GM18951 (cell line): ENCODE measurements at regions of chr6 and their contacts with region 1.

Region 1: DNA sequence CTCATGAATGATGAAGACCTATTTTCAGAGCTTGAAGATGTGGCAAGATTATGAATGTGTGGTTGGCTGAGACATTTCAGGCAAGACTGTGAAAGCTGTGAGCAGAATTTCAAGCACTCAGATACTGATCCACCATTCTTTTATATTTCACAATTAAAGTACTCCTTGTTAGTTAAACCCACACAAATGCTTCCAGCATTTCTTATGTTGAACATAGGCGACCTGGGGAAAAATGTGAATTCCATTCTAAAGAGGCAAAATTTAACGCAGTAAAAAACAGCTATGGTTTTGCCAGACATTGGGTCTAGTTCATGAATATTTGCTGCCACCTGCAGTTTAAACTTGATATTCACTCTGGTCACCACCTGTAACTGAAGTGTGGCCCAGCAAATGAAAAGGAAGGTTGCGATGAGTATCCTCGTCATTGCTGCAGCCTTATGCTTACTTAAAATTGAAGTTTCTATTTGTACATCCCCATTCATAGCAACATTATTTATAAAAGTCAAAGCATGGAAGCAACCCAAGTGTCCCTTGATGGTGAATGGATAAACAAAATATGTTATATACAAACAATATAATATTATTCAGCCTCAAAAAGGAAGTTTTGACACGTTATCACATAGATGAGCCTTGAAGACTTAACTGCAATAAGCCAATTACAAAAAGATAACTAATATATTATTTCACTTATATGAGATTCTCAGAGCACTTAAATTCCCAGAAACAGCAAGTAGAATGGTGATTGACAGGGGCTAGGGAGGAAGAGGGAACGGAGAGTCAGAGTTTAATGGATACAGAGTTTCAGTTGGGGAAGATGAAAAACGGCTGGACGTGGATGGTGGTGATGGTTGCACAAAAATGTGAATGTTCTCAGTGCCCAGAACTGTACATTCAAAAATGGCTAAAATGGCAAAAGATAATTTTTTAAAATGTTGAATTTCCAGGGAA is 32.4 kb upstream of the FAM184A start:
- POLR2A ChIP-seq: no peak

Region 2: DNA sequence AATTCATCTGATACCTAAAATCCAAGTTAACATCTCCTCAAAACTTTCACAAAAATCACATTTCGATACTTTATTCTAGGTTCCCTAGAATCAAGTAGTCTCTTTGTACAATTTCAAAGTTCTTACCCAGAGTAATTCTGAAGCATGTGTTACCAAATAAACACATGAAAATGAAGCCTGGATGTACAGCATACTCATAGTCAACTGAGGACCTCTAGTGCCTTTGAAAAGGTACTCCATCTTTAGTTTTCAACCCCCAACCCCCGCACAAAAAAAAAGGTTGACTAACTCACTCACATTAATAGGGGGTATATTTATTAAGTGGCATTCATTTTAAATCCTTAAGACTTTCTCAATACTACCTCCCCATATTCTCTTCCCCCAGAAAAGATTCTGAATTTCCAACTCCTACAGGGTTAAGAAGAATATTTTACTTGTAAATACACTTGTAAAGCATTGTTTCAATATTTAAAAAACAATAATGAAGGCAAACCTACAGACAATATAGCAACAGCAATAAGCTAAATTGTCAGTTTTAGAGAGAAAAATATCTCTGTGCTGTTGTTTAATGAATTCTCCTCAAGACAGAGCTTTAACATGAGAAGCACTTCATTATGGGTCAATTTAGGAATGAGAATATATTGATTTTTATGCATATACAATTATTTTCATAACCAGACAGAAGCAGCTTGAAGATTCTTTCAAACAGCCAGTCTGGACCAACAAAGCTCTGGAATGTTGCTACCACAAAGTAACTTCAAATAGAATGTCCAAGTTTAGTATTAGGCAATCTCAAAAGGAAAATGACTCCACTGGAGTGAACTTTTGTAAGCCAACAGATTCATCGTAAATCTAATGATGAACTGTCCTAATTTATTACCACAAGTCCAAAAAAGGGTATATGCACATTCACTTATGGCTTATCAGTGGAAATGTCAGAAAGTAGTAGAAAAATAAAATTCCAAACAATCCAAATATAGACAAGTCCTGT is 559.5 kb before region 1 on chr6:
- in situ Hi-C with region 1: loop called (anchors 25 kb)
- POLR2A ChIP-seq: no peak

Region 3: DNA sequence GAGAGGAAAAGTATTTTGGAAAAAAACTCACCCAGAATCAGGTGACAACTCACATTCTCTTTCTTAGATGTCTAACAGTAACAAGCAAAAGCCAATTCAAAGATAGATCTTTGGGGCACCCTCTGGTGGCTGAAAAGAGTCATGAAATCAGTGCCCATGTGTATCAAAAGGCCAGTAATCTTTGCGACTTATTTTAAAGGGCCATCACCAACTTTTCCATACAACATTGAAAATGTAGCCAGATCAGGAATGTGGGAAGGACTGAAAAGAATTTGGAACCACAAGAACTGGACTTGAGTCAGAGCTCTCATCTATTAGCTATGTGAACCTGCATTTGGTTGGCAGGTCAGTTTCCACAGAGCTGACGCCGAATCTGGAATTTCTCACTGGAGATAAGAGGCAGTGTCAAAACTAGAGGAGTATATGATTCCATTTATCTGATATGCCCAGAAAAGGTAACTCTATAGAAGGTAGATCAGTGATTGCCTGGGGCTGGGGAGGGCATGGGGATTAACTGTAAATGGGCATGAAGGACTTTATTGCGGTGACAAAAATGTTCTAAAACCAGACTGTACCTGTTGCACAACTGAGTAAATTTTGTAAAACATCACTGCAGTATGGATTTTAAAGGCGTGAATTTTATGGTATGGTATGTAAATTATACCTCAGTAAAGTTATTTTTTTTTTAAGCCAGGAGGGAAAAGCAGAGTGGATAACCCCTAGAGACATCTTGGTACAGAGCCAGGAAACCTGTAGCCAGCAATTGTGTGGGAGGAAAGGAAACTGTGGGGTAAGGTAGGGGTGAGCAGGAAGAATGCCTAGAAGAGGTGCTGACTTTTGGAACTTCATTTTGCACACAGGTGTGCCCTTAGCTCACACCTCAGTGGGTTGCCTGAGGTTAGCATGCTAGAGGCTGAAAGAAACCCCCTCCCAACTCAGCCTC is 334.0 kb before region 1 on chr6:
- in situ Hi-C with region 1: loop called (anchors 25 kb)
- POLR2A ChIP-seq: no peak

Region 4: GRCh38 chr6:118940748-118941147 is 170.1 kb before region 1 on chr6:
- in situ Hi-C with region 1: no loop called
- POLR2A ChIP-seq: no peak

Region 5: GRCh38 chr6:118952683-118953082 is 158.2 kb before region 1 on chr6:
- in situ Hi-C with region 1: loop called (anchors 10 kb)
- POLR2A ChIP-seq: no peak

Region 6: GRCh38 chr6:119552021-119552420 is 441.1 kb after region 1 on chr6:
- in situ Hi-C with region 1: no loop called
- POLR2A ChIP-seq: no peak